ENCODE measurements at regions of chr9 and their contacts with region 1.

Region 1: DNA sequence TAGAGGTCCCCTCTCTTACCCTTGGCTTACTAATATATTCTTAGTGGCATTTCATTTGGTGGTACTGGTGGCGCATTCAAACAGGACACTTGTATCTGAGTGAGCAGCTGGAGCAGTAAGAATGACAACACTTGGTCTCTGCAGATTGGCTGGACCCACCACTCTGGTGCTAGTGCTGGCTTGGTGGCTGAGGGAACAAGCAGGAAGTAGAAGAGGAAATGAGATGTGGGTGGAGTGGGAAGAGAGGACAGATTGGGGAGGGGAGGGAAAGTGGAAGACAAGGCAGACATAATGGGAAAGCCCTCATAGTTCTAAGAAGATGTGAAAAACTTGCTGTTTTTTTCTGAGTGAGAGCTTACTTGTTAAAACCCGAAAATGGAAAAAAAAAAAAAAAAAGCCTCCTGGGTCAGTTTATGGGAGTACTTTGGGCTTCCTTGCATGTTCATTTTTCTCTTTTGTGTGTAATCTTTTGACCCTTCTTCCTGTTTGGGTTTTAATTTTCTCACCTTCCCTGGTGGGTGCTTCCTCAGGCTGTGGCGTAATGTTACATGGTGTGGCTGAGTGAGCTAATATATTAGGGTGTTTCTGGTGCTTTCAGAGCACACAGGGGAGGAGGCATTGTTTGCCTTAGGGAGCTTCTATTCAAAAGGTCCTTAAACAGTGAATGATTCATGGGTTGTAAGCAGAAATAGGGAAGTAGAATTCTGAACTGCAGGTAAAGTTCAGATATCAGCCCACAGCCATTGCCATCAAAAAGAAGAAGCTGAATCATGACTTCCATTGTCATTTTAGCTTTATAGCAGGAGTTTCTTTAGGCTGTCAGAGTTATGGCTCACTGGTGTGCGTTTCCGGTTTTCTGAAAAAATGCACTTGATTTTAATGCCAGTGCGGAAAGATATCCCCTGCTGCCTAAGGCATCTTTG is 52.3 kb downstream of the TLE4 start:
- DNase-seq: peak; percentile 79
- ATAC-seq: peak; percentile 97
- H3K4me3 ChIP-seq: peak overlapping the region; percentile 48; the same call in 1 of the 2 replicates
- H3K27ac ChIP-seq: peak overlapping the region; percentile 67
- H3K4me1 ChIP-seq: peaks cover 10% of the 10 kb centered on the region
- H3K27me3 ChIP-seq: no peaks in the 10 kb centered on the region
- CTCF ChIP-seq: no peak
- EP300 ChIP-seq: peak in 1 of 2 experiments; percentile 63; a peak in 2 of 4 replicates
- POLR2A ChIP-seq: no peak
- RAD21 ChIP-seq: peak; percentile 2; the same call in 1 of the 2 replicates

Region 2: DNA sequence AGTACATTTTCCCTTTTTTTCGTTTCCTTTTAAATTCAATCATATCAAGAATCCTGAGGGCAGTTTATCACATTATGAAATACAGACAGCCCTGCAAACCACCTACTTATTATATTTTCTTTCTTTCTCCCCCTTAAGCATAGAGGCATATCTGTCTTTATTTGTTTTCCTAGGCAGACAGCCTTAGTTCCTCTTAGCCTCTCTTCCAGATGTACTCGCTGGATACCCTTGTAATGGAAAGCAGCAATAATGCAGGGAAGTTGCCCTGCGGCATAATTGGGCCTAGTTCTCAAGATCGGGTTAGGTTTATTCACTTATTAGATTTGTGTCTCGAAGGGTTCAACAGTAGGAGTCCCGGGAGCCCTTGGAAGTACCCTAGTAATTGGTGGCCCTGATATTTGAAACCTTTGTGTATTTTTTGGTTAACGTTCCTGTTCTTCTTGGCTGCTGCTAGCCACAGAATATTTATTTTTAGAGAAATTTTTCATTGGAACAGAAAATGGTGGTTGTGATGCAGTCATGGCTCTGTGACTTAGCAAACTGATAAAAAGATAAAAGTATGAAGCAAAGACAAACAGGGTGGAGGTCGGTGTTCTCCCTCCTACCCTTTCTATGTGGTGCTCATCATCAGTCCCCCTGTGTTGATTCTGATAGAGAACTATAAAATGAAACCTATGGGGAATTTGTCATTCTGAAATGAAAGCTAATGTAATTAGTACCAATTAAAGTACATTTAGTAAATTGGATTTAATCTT is 45.9 kb before region 1 on chr9:
- CTCF ChIA-PET with region 1: interaction called, 4 read pairs
- POLR2A ChIA-PET with region 1: interaction called, 3 read pairs
- RAD21 ChIA-PET with region 1: interaction called, 5 read pairs
- SMC1A ChIA-PET with region 1: interaction called, 17 read pairs
- in situ Hi-C with region 1: no loop called
- intact Hi-C with region 1: no loop called
- DNase-seq: no peak
- ATAC-seq: no peak
- H3K4me3 ChIP-seq: 0 out of 2 replicates have a peak overlapping the region, but pooled peaks have one; percentile 3
- H3K27ac ChIP-seq: no peak overlapping the region
- H3K4me1 ChIP-seq: no peaks in the 10 kb centered on the region
- H3K27me3 ChIP-seq: no peaks in the 10 kb centered on the region
- CTCF ChIP-seq: no peak
- EP300 ChIP-seq: no peak
- POLR2A ChIP-seq: no peak
- RAD21 ChIP-seq: no peak

Region 3: GRCh38 chr9:79592726-79593493 is 31.1 kb before region 1 on chr9:
- CTCF ChIA-PET with region 1: no interaction called
- POLR2A ChIA-PET with region 1: no interaction called
- RAD21 ChIA-PET with region 1: interaction called, 3 read pairs
- SMC1A ChIA-PET with region 1: interaction called, 11 read pairs
- in situ Hi-C with region 1: no loop called
- intact Hi-C with region 1: no loop called
- DNase-seq: no peak
- ATAC-seq: peak; percentile 76
- H3K4me3 ChIP-seq: no peak overlapping the region
- H3K27ac ChIP-seq: no peak overlapping the region
- H3K4me1 ChIP-seq: peaks cover 16% of the 10 kb centered on the region
- H3K27me3 ChIP-seq: no peaks in the 10 kb centered on the region
- CTCF ChIP-seq: no peak
- EP300 ChIP-seq: peak in 1 of 2 experiments; percentile 56; a peak in 1 of 4 replicates
- POLR2A ChIP-seq: no peak
- RAD21 ChIP-seq: no peak

Region 4: DNA sequence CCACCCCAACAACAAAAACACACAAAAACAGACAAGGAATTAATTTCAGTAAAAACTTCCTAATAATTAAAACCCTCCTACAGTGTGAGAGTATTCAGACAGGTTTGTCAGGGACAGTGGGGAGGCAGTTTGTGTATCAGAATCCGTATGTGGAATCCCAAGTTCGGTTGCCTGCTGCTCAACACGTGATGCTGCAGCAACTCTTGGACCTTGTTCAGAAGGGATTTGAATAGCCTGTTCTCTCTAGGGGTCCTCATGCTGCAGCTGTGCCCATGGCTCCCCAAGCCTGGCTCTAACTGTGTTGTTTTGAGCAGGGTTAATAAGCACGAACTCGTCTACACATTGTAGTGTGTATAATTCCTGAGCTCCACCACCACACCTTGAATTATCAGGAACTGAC is 23.6 kb before region 1 on chr9:
- CTCF ChIA-PET with region 1: interaction called, 3 read pairs
- POLR2A ChIA-PET with region 1: no interaction called
- RAD21 ChIA-PET with region 1: interaction called, 4 read pairs
- SMC1A ChIA-PET with region 1: interaction called, 14 read pairs
- in situ Hi-C with region 1: no loop called
- intact Hi-C with region 1: no loop called
- DNase-seq: no peak
- ATAC-seq: no peak
- H3K4me3 ChIP-seq: no peak overlapping the region
- H3K27ac ChIP-seq: no peak overlapping the region
- H3K4me1 ChIP-seq: no peaks in the 10 kb centered on the region
- H3K27me3 ChIP-seq: no peaks in the 10 kb centered on the region
- CTCF ChIP-seq: no peak
- EP300 ChIP-seq: no peak
- POLR2A ChIP-seq: no peak
- RAD21 ChIP-seq: no peak

Region 5: GRCh38 chr9:79655551-79655950 is 31.5 kb after region 1 on chr9:
- CTCF ChIA-PET with region 1: no interaction called
- POLR2A ChIA-PET with region 1: no interaction called
- RAD21 ChIA-PET with region 1: no interaction called
- SMC1A ChIA-PET with region 1: no interaction called
- in situ Hi-C with region 1: no loop called
- intact Hi-C with region 1: no loop called
- DNase-seq: no peak
- ATAC-seq: no peak
- H3K4me3 ChIP-seq: no peak overlapping the region
- H3K27ac ChIP-seq: no peak overlapping the region
- H3K4me1 ChIP-seq: no peaks in the 10 kb centered on the region
- H3K27me3 ChIP-seq: no peaks in the 10 kb centered on the region
- CTCF ChIP-seq: no peak
- EP300 ChIP-seq: no peak
- POLR2A ChIP-seq: no peak
- RAD21 ChIP-seq: no peak

Region 6: DNA sequence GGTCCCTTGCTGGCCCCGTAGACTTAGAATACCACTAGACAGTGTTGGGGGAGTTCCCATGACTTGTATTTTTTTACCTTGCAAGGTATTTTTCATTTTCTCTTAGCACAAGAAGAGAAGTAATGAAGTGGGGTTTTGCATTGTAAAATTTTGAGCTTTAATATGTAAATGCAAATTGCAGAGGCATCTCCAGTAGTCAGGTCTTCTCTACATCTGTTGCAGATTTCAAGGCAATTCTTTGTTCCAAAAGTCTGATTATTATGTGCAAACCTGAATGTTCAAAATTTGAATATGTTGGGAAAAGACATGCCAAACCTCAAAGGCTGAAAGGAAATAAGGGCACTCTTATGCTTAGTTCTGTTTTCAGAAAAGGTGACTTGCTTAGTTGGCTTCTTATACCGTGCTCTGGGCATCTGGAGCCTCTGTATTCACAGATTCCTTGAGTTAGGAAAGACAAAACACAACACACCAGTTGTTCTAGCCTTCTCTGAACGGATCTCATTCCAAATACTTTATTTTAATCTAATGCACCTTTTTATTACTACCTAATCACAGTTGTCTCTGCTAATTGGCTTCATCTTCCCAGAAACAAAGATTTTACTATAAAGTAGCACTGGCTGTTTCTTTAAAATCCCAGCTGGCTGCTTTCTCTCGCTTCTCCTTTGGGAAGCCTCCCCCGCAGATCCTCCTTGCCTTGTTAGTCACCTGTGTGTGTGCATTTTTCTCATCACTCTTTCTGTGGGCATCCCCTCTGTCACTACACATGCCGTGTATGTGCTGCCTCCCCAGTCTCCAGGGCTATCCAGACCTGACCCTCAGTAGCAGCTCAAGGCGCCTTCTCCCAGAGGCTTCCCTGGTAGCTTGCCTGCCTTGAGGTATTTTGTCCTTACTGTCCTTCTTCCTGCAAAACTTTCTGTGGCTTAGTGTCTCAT is 85.9 kb after region 1 on chr9:
- CTCF ChIA-PET with region 1: no interaction called
- POLR2A ChIA-PET with region 1: no interaction called
- RAD21 ChIA-PET with region 1: no interaction called
- SMC1A ChIA-PET with region 1: no interaction called
- in situ Hi-C with region 1: no loop called
- intact Hi-C with region 1: no loop called
- DNase-seq: no peak
- ATAC-seq: no peak
- H3K4me3 ChIP-seq: no peak overlapping the region
- H3K27ac ChIP-seq: no peak overlapping the region
- H3K4me1 ChIP-seq: no peaks in the 10 kb centered on the region
- H3K27me3 ChIP-seq: no peaks in the 10 kb centered on the region
- CTCF ChIP-seq: no peak
- EP300 ChIP-seq: no peak
- POLR2A ChIP-seq: no peak
- RAD21 ChIP-seq: no peak

Measured in GM12878 (cell line).